ENCODE measurements at regions of chr7 and their contacts with region 1.

Region 1: DNA sequence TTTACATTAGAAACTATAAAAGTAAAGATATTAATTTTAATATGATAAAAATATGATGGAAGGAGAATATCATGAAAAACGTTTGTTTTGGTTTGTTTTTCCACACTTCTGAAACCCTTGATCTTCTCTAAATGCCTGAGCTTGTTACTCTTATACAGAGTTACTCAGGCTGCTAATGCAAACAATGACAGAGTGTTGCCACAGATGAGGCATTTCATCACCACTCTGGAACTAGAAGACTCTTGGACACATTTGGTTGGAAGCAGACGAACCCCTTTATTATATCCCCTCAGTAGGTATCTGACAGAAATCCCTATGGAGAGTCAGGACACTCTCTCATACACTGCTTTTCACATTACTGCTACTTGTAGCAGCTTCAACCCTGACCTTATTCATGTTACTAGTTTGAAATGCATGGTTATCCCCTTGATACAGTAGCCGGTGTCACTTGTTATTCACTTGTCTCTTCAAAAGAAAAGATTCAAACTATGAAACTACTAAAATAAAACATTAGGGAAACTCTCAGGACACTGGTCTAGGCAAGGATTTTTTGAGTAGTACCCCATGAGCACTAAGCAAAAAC is 66.9 kb downstream of the SEMA3C start:
- DNase-seq: peak; percentile 72
- H3K4me3 Mint-ChIP-seq: no peak overlapping the region
- H3K27ac Mint-ChIP-seq: peak overlapping the region; percentile 79
- H3K4me1 Mint-ChIP-seq: peaks cover 22% of the 10 kb centered on the region
- H3K27me3 Mint-ChIP-seq: no peaks in the 10 kb centered on the region
- CTCF ChIP-seq: no peak

Region 2: DNA sequence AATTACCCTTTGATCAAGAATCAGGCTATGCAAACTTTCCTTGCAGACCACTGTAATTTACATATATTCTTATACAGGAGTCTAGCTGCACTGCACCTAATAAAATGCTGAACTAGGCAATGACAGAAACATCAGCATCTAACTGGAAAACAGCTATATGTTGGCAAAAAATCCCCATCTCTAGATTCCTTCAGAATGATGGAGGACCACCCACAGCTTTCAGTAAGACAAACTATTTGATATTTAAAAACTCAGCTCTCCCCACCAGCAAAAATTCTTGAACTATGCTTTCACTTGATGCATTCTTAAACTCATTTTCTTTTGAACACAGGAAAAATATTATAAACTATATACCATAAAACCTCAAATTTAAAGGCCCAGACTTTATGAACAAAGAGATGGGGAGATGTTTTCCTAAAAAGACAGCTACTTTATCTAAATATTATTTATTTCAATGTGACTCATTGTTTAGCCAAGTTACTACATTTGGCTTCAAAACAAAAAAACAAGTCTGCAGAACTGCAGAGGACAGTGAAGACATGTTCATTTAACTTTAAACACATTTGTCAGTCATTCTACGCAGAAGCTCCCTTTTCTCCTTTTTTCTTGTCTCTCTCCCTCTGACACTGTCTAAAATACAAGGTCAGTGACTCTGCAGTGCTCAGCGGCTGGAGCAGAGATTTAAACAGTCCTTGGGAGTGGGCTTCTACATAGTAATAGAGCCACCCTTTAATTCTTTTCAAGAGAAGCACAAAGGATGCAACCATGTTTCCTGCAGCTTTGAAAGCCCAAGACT is 10.4 kb before region 1 on chr7:
- CTCF ChIA-PET with region 1: interaction called, 4 read pairs
- POLR2A ChIA-PET with region 1: interaction called, 23 read pairs
- intact Hi-C with region 1: no loop called
- DNase-seq: no peak
- H3K4me3 Mint-ChIP-seq: no peak overlapping the region
- H3K27ac Mint-ChIP-seq: no peak overlapping the region
- H3K4me1 Mint-ChIP-seq: peaks cover 37% of the 10 kb centered on the region
- H3K27me3 Mint-ChIP-seq: no peaks in the 10 kb centered on the region
- CTCF ChIP-seq: no peak

Region 3: DNA sequence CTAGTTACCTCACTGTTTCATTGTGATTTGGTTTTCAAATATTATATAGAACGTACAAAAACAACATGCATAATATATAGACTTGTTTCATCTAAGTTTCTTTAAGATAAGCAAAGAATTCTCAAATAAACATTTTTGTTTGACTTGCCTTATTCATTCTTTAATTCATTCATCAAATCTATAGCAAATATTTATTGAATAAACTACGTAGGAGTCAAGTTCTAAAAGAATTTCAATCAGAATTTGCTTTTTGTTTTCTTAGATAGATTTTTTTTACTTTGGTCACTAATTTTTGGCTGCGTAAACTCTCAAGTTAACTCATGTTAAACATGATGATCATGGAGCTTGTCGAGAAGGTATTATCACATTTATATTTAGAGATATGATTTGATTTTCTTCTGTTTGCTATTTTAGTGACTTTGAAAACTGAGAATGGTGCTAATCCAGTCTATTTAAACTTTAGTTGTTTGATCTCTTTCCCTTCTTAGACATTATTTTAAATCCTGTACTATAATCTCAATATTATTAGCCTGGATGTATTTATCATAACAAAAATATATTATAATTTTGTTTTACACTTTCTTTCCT is 246.1 kb after region 1 on chr7:
- CTCF ChIA-PET with region 1: no interaction called
- POLR2A ChIA-PET with region 1: no interaction called
- intact Hi-C with region 1: no loop called
- DNase-seq: no peak
- H3K4me3 Mint-ChIP-seq: no peak overlapping the region
- H3K27ac Mint-ChIP-seq: no peak overlapping the region
- H3K4me1 Mint-ChIP-seq: peaks cover 5% of the 10 kb centered on the region
- H3K27me3 Mint-ChIP-seq: no peaks in the 10 kb centered on the region
- CTCF ChIP-seq: no peak